Gastrocnemius medialis (tissue), 4 donors: ENCODE measurements at regions of chr4 and their contacts with region 1.

Region 1: GRCh38 chr4:47914220-47914925 is at the start of gene NFXL1:
- DNase-seq: peak; percentile 96 to 98
- ATAC-seq: peak; percentile 99
- H3K4me3 ChIP-seq: peak within 1 kb of the TSS; percentile 79 to 92 (median 84)
- H3K27ac ChIP-seq: peak within 1 kb of the TSS; percentile 75 to 84 (median 80)
- H3K4me1 ChIP-seq: peaks cover 11 to 12% of the 10 kb centered on the region in 2 donors
- H3K27me3 ChIP-seq: no peaks in the 10 kb centered on the region
- CTCF ChIP-seq: no peak
- POLR2A ChIP-seq: peak; percentile 81 to 82
- total RNA-seq, gene NFXL1: 3.7 to 10.8 (median 5.5) TPM

Region 2: DNA sequence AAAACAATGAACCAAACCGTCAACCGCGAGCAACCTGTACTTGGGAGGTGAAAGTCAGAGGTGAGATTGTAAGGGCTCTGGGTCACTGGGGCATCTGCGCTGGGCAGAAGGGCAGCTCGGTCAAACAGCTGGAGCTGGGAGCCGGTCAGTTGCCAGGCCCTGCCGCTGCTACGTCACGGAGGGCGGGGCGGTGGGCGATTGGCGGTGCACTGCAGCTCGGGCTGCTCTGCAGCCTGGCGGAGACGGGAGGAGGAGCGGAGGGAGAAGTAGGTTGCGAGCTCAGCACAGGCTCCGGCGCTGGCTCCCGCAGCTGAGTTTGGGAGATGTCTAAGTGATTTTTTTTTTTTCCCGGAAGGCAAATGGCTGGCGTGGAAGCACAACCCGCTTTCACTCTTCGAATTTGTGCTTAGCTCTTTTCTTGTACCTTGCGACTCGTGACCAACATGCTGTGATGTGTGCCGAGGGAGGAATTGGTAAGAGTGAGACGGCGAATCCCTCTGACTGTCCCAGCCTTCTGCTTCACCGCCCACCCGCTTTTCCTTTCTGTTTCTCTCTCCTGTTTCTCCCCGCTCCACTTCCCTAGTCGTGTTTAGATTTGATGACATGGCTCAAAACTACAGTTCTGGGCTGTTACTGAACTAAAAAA is 429.2 kb before region 1 on chr4 and contains the start of gene ATP10D:
- in situ Hi-C with region 1: no loop called
- intact Hi-C with region 1: loop called (anchors 1 kb)
- DNase-seq: peak; percentile 82 to 86
- ATAC-seq: peak; percentile 97
- H3K4me3 ChIP-seq: peak within 1 kb of the TSS; percentile 62 to 73 (median 68)
- H3K27ac ChIP-seq: peak within 1 kb of the TSS; percentile 81 to 83 (median 82)
- H3K4me1 ChIP-seq: peaks cover 0 to 5% of the 10 kb centered on the region in 2 donors
- H3K27me3 ChIP-seq: no peaks in the 10 kb centered on the region
- CTCF ChIP-seq: peak in 2 of 5 experiments; percentile 31 to 36
- POLR2A ChIP-seq: peak; percentile 60 to 78
- total RNA-seq, gene ATP10D: 1.5 to 3.2 (median 2.8) TPM

Region 3: DNA sequence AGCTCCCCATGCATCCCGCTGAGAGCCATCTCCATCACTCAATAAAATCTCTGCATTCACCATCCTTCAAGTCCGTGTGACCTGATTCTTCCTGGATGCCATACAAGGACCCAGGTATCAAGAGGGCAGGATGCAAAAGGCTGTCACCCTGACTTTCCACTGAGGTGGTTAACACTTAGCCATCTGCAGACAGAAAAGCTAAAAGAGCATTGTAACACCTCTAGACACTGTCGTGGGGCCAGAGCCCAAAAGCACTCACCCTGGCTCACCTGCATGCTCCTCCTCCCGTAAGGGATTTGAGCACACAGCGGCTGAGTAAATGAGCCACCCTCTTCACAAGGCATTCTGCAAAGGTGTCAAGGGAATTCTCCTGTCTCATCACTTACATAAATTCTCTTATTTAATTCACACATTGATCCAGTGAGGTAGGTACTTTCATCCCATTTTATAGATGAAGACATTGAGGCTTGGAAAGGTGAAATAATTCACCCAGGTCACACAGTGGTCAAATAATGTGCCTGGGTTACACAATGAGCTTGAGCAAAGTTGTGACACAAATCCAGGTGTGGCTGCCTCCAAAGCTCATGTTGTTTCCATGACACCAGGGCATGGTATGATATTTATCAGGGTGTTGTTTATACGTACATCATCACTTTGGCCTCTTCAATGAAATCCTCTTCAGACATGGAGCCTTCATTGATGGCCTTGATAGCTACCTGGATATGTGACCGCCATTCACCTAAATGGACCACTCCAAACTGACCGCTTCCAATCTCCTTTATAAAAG is 171.6 kb after region 1 on chr4:
- in situ Hi-C with region 1: no loop called
- intact Hi-C with region 1: loop called (anchors 5 kb)
- DNase-seq: no peak
- ATAC-seq: no peak
- H3K4me3 ChIP-seq: no peak overlapping the region
- H3K27ac ChIP-seq: no peak overlapping the region
- H3K4me1 ChIP-seq: no peaks in the 10 kb centered on the region
- H3K27me3 ChIP-seq: no peaks in the 10 kb centered on the region
- CTCF ChIP-seq: no peak
- POLR2A ChIP-seq: no peak

Region 4: GRCh38 chr4:48329976-48330375 is 415.6 kb after region 1 on chr4:
- in situ Hi-C with region 1: no loop called
- intact Hi-C with region 1: loop called (anchors 10 kb)
- DNase-seq: no peak
- ATAC-seq: no peak
- H3K4me3 ChIP-seq: no peak overlapping the region
- H3K27ac ChIP-seq: peak overlapping the region in 3 of 4 donors; percentile 5 to 83 (median 80)
- H3K4me1 ChIP-seq: peaks cover 11 to 36% of the 10 kb centered on the region in 2 donors
- H3K27me3 ChIP-seq: no peaks in the 10 kb centered on the region
- CTCF ChIP-seq: no peak
- POLR2A ChIP-seq: no peak

Region 5: DNA sequence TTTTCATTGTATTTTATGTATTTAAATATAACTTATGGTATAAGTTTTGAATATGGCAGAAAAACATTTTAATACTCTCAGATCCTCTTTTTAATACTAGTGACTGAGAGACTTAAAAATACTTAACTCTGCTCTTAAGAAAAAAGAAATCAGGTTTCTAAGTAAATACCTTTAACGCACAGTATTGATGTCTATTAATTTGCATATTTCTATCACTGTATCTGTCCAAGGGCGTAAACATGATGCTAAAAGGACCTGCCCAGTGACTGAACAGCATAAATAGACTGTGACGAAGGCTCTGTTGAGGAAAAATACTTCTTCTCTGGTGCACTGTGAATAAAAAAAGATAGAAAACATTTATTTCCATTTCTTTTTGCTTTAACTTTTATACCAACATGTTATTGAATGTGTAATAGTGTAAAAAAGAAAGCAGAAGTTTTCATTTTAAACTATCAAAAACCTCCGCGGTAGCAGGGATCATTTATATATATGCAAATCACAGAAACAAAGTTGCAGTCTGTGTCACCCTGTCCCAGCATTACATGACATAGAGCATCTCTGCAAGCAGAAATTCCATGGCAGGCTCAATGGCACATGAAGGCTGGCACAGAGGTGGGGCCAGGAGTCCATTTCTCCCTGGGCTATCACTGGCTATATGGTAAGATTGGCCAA is 651.1 kb after region 1 on chr4:
- in situ Hi-C with region 1: no loop called
- intact Hi-C with region 1: no loop called
- DNase-seq: no peak
- ATAC-seq: no peak
- H3K4me3 ChIP-seq: no peak overlapping the region
- H3K27ac ChIP-seq: no peak overlapping the region
- H3K4me1 ChIP-seq: no peaks in the 10 kb centered on the region
- H3K27me3 ChIP-seq: no peaks in the 10 kb centered on the region
- CTCF ChIP-seq: no peak
- POLR2A ChIP-seq: no peak

Region 6: DNA sequence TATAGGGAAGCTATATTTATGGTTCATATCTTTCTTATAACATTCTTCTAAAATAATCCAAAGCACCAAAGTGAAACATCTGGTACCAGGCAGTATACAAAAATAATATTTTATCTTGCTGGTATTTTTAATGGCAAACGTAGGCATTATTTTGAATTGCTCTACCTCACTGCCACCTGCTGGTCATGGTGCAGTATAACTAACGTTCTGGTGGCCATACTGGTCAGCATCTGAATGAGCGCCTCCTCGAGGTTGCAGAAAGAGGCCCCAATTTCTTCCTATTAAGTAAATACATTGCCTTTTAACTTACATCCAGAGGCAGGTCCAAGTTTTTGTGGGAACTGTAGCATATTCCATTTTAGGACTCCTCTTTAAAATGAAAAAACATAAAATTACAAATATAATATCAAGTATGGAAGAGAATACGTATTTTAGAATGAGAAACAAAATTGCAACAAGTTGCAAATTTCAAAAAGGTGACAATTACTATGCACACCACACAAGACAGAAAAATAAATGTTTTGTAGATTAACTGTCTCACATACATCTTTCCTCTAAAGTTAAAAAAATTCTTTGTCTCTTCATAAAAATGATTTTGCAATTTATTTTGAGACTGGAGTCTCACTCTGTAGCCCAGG is 1048.8 kb after region 1 on chr4:
- in situ Hi-C with region 1: no loop called
- intact Hi-C with region 1: no loop called
- DNase-seq: peak; percentile 32 to 40
- ATAC-seq: peak; percentile 65 to 81
- H3K4me3 ChIP-seq: no peak overlapping the region
- H3K27ac ChIP-seq: no peak overlapping the region
- H3K4me1 ChIP-seq: no peaks in the 10 kb centered on the region
- H3K27me3 ChIP-seq: no peaks in the 10 kb centered on the region
- CTCF ChIP-seq: peak; percentile 64 to 91 (median 85)
- POLR2A ChIP-seq: no peak